ENCODE measurements at regions of chr9 and their contacts with region 1.

Region 1: DNA sequence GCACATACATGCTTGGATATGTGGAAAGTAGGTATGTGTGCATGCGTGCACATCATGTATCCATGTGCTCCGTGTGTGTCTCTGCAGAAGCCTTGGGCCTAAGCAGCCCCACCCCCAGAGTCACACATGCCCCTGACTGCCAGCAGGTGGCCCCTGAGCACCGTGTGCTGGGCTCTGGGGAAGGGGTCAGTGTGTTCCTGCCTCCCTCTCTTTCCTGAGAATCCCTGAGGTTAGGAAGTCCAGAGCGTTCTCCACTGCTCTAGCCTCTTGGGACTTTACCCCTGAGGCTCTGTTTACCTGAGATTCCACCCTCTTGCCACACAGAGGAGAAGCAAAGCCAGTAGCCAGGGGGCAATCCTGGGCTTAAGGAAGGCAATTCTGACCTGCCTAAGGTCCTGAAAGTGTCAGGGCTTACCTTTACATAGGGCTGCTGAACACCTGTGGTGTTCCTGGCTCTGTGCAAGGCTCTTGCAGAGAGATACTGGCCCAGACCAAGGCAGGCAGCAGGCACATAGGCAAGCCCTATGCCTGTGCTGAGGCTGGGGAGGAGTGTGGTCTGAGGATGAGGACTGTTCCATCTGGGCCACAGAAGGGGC is 207.3 kb downstream of the TMEM38B start:
- DNase-seq: peak; percentile 66 to 84
- H3K4me3 ChIP-seq: no peak overlapping the region
- H3K4me3 Mint-ChIP-seq: no peak overlapping the region
- H3K27ac Mint-ChIP-seq: no peak overlapping the region
- H3K4me1 ChIP-seq: peaks cover 4% of the 10 kb centered on the region
- H3K4me1 Mint-ChIP-seq: no peaks in the 10 kb centered on the region
- H3K27me3 ChIP-seq: no peaks in the 10 kb centered on the region
- H3K27me3 Mint-ChIP-seq: peaks cover 5% of the 10 kb centered on the region
- CTCF ChIP-seq: peak; percentile 70 to 74

Region 2: GRCh38 chr9:105656131-105656921 is 245.3 kb before region 1 on chr9:
- CTCF ChIA-PET with region 1: no interaction called
- POLR2A ChIA-PET with region 1: no interaction called
- intact Hi-C with region 1: no loop called
- DNase-seq: peak; percentile 50 to 74
- H3K4me3 ChIP-seq: peak overlapping the region; percentile 94
- H3K4me3 Mint-ChIP-seq: peak overlapping the region; percentile 82
- H3K27ac Mint-ChIP-seq: peak overlapping the region; percentile 34
- H3K4me1 ChIP-seq: no peaks in the 10 kb centered on the region
- H3K4me1 Mint-ChIP-seq: peaks cover 7% of the 10 kb centered on the region
- H3K27me3 ChIP-seq: no peaks in the 10 kb centered on the region
- H3K27me3 Mint-ChIP-seq: no peaks in the 10 kb centered on the region
- CTCF ChIP-seq: peak; percentile 4 to 22

Region 3: DNA sequence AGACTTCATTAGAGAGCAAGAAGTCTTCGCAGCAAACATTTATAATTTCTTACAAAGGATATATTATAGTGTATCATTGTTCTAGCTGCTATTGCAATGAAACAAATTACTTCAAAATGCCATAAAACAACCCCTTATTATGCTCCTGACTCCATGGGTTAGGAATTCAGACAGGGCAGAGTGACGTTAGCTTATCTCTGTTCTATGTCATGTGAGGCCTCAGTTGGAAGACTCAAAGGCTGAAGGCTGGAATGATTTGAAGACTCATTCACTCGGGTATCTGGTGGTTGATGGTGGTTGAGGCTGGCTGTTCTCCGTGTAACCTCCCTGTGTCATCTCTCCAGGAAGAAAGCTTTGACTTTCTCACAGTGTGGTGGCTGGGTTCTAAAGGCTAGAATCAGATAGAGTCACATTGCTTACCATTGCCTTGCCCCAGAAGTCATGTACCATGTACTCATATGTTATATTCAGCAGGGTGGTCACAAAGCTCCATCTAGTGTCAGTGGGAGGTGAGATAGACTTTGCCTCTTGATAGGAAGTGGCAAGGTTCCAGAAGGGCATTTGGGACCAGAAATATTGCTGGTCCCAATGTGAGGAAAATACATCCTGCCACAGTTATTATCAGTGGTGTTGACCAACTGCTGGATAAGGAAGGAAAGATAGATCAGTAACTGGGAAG is 19.6 kb after region 1 on chr9:
- CTCF ChIA-PET with region 1: no interaction called
- POLR2A ChIA-PET with region 1: no interaction called
- intact Hi-C with region 1: loop called (anchors 1 kb)
- DNase-seq: no peak
- H3K4me3 ChIP-seq: no peak overlapping the region
- H3K4me3 Mint-ChIP-seq: no peak overlapping the region
- H3K27ac Mint-ChIP-seq: no peak overlapping the region
- H3K4me1 ChIP-seq: peaks cover 9% of the 10 kb centered on the region
- H3K4me1 Mint-ChIP-seq: peaks cover 13% of the 10 kb centered on the region
- H3K27me3 ChIP-seq: no peaks in the 10 kb centered on the region
- H3K27me3 Mint-ChIP-seq: no peaks in the 10 kb centered on the region
- CTCF ChIP-seq: peak in 1 of 2 experiments; percentile 15

Region 4: DNA sequence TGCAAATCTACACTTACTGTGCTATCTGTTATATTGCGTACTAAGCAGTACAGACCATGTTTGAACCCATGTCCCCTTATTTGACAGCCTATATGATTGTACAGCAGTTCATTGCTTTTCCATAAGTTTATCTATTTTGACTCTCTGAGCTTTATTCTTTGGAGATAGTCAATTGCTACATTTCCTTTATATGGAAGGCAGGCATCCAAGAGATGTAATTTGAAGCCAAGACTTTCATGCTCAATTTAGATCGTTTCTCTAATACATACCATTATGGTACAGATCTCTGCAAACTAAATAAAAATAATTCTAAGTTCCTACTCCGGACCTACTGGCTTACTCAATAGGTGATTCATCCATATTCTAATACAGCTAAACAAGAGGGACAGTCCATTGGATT is 217.6 kb after region 1 on chr9:
- CTCF ChIA-PET with region 1: no interaction called
- POLR2A ChIA-PET with region 1: no interaction called
- intact Hi-C with region 1: no loop called
- DNase-seq: no peak
- H3K4me3 ChIP-seq: no peak overlapping the region
- H3K4me3 Mint-ChIP-seq: no peak overlapping the region
- H3K27ac Mint-ChIP-seq: no peak overlapping the region
- H3K4me1 ChIP-seq: no peaks in the 10 kb centered on the region
- H3K4me1 Mint-ChIP-seq: no peaks in the 10 kb centered on the region
- H3K27me3 ChIP-seq: no peaks in the 10 kb centered on the region
- H3K27me3 Mint-ChIP-seq: no peaks in the 10 kb centered on the region
- CTCF ChIP-seq: no peak